ENCODE measurements at regions of chr4 and their contacts with region 1.

Region 1: DNA sequence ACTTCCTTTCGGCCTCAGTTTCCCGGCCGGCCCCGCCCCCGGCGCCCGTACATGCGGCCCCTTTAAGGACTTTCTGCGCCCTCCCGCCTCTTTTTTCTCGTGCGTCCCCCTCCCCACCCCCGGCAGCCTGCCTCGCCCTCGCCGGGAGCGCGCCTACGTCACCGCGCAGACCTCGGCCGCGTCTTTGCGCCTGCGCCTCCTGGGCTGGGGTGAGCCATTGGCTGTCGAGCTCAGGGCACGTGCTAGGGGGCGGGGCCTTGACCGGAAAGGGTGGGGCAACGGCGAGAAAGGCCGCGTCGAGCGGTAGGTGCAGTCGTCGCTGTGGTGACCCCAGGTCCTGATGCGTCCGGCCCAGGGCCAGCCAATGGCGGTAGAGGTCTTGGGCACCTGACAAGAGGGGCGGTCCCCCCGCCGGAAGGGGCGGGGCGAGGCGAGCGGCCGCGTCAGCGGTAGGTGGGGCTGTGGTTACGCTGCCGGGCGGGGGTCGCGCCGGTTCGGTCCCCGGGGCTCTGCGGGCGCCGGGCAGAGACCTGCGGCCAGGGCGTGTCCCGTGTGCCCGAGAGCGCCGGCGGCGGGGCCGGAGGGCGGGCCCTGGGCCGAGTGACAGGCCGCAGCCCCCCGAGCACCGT is at the start of gene UVSSA:
- DNase-seq: peak; percentile 100
- H3K4me3 Mint-ChIP-seq: peak within 1 kb of the TSS; percentile 82
- H3K27ac Mint-ChIP-seq: peak within 1 kb of the TSS; percentile 90
- H3K4me1 Mint-ChIP-seq: peaks cover 50% of the 10 kb centered on the region
- H3K27me3 Mint-ChIP-seq: no peaks in the 10 kb centered on the region
- total RNA-seq, gene UVSSA: 20.2 to 21.5 TPM

Region 2: DNA sequence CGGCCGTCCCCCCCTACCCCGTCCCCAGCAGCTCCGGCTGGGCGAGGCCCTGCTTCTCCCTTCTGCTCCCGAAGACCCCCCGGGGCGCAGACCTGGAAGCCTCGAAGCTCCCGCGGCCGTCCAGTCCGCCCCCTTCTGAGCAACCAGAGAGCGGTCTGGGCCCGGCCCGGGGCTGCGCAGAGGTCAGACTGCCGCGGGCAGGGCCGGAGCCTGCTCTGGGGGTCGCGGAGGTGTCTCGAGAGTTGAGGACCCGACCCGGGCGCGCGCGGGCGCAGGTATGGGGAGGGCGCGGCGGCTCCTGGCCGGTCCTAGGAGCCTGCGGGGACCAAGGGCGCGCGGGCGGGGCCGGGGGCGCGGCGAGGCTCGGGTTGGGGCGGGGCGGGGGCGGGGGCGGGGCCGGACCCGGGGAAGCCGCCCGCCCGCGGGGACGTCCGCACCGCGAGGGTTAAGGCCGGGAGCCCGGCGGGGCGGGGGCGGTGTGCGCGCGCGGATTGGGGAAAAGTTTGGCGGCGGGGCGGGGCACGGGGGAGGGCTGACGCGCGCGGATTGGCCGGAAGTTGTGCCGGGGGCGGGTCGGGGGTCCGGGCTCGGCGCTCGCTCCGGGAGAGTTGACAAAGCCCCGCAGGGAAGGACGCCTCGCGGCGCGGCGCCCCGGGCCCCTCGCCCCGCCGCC is 335.7 kb before region 1 on chr4 and contains the start of gene FGFRL1:
- CTCF ChIA-PET with region 1: no interaction called
- POLR2A ChIA-PET with region 1: no interaction called
- intact Hi-C with region 1: loop called (anchors 2 kb)
- DNase-seq: peak; percentile 95
- H3K4me3 Mint-ChIP-seq: peak within 1 kb of the TSS; percentile 69
- H3K27ac Mint-ChIP-seq: peak within 1 kb of the TSS; percentile 76
- H3K4me1 Mint-ChIP-seq: peaks cover 10% of the 10 kb centered on the region
- H3K27me3 Mint-ChIP-seq: peaks cover 27% of the 10 kb centered on the region
- total RNA-seq, gene FGFRL1: 12.2 to 15.1 TPM

Region 3: GRCh38 chr4:1183985-1184773 is 162.7 kb before region 1 on chr4:
- CTCF ChIA-PET with region 1: no interaction called
- POLR2A ChIA-PET with region 1: no interaction called
- intact Hi-C with region 1: loop called (anchors 5 kb)
- DNase-seq: no peak
- H3K4me3 Mint-ChIP-seq: no peak overlapping the region
- H3K27ac Mint-ChIP-seq: peak overlapping the region; percentile 49
- H3K4me1 Mint-ChIP-seq: peaks cover 13% of the 10 kb centered on the region
- H3K27me3 Mint-ChIP-seq: peaks cover 9% of the 10 kb centered on the region

Region 4: GRCh38 chr4:1266881-1267763 is 79.8 kb before region 1 on chr4:
- CTCF ChIA-PET with region 1: interaction called, 17 read pairs
- POLR2A ChIA-PET with region 1: no interaction called
- intact Hi-C with region 1: loop called (anchors 5 kb)
- DNase-seq: no peak
- H3K4me3 Mint-ChIP-seq: peak overlapping the region; percentile 49
- H3K27ac Mint-ChIP-seq: peak overlapping the region; percentile 70
- H3K4me1 Mint-ChIP-seq: peaks cover 13% of the 10 kb centered on the region
- H3K27me3 Mint-ChIP-seq: no peaks in the 10 kb centered on the region

Region 5: GRCh38 chr4:1309261-1310010 is 37.5 kb before region 1 on chr4:
- CTCF ChIA-PET with region 1: no interaction called
- POLR2A ChIA-PET with region 1: no interaction called
- intact Hi-C with region 1: loop called (anchors 5 kb)
- DNase-seq: peak; percentile 74
- H3K4me3 Mint-ChIP-seq: peak overlapping the region; percentile 48
- H3K27ac Mint-ChIP-seq: peak overlapping the region; percentile 69
- H3K4me1 Mint-ChIP-seq: peaks cover 65% of the 10 kb centered on the region
- H3K27me3 Mint-ChIP-seq: no peaks in the 10 kb centered on the region

Region 6: DNA sequence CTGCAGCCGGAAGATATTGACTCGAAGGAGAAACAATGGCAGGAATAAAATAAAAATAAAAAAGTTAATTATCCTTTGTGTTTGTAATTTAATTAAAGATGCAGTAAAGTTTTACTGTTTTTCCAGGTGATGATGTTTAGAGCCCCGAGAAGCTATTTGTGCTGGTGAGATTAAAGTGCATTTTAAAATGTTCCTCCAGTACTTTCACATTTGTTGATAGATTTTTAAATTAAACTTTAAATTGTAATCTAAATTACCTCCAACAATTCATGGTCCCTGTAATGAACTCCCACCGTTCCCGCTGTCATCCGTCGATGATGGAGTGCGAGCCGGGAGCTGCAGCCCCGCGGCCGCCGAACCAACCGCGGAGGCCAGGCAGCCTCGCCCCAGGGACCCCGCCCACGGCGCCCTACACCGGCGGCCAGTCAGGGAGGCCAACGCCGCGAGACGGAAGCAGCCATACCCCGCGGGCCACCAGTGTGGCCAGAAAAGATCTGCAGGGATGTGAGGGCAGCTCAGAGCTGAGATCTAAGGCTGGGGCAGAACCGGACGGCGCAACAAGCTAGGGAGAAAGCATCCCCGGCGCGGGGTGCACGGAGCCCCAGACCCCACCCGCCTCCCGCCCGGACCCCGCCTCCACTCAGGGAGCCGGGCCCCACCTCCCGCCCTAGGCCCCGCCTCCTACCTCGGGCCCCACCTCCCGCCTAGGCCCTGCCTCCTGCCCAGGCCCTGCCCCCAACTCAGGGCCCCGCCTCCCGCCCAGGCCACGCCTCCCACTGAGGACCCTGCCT is 233.2 kb after region 1 on chr4:
- CTCF ChIA-PET with region 1: no interaction called
- POLR2A ChIA-PET with region 1: no interaction called
- intact Hi-C with region 1: loop called (anchors 5 kb)
- DNase-seq: peak; percentile 94
- H3K4me3 Mint-ChIP-seq: peak overlapping the region; percentile 73
- H3K27ac Mint-ChIP-seq: peak overlapping the region; percentile 65
- H3K4me1 Mint-ChIP-seq: peaks cover 4% of the 10 kb centered on the region
- H3K27me3 Mint-ChIP-seq: no peaks in the 10 kb centered on the region

Region 7: GRCh38 chr4:1674682-1675081 is 327.8 kb after region 1 on chr4:
- CTCF ChIA-PET with region 1: no interaction called
- POLR2A ChIA-PET with region 1: no interaction called
- intact Hi-C with region 1: no loop called
- DNase-seq: no peak
- H3K4me3 Mint-ChIP-seq: no peak overlapping the region
- H3K27ac Mint-ChIP-seq: no peak overlapping the region
- H3K4me1 Mint-ChIP-seq: no peaks in the 10 kb centered on the region
- H3K27me3 Mint-ChIP-seq: no peaks in the 10 kb centered on the region

Region 8: DNA sequence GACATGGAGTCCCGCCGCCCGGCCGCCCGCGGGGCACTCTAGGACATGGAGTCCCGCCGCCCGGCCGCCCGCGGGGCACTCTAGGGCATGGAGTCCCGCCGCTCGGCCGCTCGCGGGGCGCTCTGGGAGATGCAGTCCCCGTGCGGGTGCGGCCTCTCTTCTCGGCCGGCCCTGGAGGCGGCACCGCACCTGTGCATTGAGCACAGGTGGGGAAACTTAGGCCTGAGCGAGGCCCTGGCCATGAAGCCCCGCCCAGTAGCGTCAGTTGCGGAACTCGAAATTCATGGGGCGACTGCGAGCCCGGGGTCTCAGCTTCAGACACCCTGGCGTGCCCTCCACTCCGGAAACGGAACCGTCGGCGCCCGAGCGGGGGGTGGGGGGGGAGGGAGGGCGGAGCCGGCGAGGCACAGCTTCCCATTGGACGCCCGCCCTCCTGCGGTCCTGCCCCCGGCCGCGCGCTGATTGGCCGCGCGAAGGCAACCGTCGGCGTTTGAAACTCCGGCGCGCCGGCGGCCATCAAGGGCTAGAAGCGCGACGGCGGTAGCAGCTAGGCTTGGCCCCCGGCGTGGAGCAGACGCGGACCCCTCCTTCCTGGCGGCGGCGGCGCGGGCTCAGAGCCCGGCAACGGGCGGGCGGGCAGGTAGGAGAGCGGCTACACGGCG is 374.2 kb after region 1 on chr4 and contains the starts of genes TACC3 and TMEM129:
- CTCF ChIA-PET with region 1: interaction called, 4 read pairs
- POLR2A ChIA-PET with region 1: no interaction called
- intact Hi-C with region 1: loop called (anchors 2 kb)
- DNase-seq: peak; percentile 97
- H3K4me3 Mint-ChIP-seq: peak within 1 kb of the TSS; percentile 89
- H3K27ac Mint-ChIP-seq: peak within 1 kb of the TSS; percentile 99
- H3K4me1 Mint-ChIP-seq: peaks cover 52% of the 10 kb centered on the region
- H3K27me3 Mint-ChIP-seq: no peaks in the 10 kb centered on the region
- total RNA-seq, gene TACC3: 194 to 201 TPM
- total RNA-seq, gene TMEM129: 16.2 to 18.1 TPM